Cardiac septum (tissue), 1 donor: ENCODE measurements at regions of chr6 and their contacts with region 1.

Region 1: DNA sequence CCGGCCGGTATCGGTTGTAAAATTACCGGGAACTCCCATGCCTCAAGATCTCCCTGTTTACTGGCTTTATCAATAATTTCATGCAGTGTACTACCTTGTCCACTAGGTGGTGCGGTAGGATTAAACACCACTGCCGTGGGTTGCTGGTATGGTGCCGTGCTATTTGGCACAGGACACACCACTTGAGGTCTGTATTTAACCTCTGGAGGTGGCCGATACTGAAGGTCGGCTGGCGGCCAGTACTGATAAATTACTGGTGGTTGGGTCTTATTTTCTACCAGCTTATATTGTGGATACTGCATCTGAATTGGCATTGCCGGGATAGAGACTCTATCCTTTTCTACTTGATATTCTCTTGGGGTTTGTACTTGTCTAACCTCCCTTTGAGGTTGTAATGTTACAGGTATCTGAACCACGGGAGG is 14.3 kb upstream of the PTCRA start:
- DNase-seq: peak; percentile 88

Region 2: DNA sequence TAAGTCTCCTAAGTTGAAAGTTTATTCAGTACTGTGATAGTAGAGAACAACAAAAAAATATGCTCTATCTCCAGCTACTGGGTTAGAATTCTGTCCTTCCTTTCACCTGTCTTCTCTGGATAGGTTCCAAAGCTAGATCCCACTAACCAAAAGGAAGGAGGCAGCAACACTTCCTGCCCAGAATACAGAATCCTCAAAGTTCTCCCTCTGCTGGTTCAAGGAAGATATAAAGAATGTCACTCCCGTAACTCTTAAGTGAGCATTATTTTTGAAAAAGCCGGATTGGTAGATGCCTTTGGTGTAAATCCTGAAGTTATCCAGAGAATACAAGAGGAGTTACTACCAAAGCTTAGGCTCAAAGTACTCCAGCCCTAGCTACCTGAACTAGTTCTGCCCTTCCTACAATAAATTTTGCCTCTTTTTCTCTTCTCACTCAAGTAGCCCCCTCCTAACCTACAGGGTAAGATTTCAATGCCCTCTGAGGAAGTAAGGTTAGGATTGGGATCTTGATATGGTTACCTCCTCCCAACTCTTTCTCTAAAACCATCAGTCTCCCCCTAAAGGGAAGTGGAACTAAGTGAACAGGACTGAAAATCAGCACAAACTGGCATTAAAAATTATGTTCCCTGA is 433.0 kb after region 1 on chr6:
- intact Hi-C with region 1: loop called (anchors 10 kb)
- DNase-seq: no peak